Heart left ventricle (tissue), 16 donors: ENCODE measurements at regions of chr1 and their contacts with region 1.

Region 1: GRCh38 chr1:175373786-175374623 is 181.4 kb upstream of the KIAA0040 start:
- DNase-seq: no peak
- ATAC-seq: peak in 3 of 4 donors; percentile 62 to 77 (median 73)
- H3K4me3 ChIP-seq: no peak overlapping the region
- H3K27ac ChIP-seq: no peak overlapping the region
- H3K4me1 ChIP-seq: no peaks in the 10 kb centered on the region
- H3K27me3 ChIP-seq: peaks cover 0 to 15% (median 0%) of the 10 kb centered on the region in 9 donors
- CTCF ChIP-seq: peak; percentile 43 to 73 (median 61)
- POLR2A ChIP-seq: no peak

Region 2: GRCh38 chr1:175580841-175581240 is 206.8 kb after region 1 on chr1:
- intact Hi-C with region 1: no loop called
- DNase-seq: no peak
- ATAC-seq: no peak
- H3K4me3 ChIP-seq: no peak overlapping the region
- H3K27ac ChIP-seq: no peak overlapping the region
- H3K4me1 ChIP-seq: no peaks in the 10 kb centered on the region
- H3K27me3 ChIP-seq: peaks cover 0 to 5% (median 0%) of the 10 kb centered on the region in 9 donors
- CTCF ChIP-seq: no peak
- POLR2A ChIP-seq: no peak

Region 3: GRCh38 chr1:175742790-175743459 is 368.9 kb after region 1 on chr1:
- intact Hi-C with region 1: loop called in 1 of 10 experiments (anchors 10 kb)
- DNase-seq: no peak
- ATAC-seq: peak; percentile 37 to 79 (median 51)
- H3K4me3 ChIP-seq: no peak overlapping the region
- H3K27ac ChIP-seq: no peak overlapping the region
- H3K4me1 ChIP-seq: peaks cover 0 to 5% (median 0%) of the 10 kb centered on the region in 12 donors
- H3K27me3 ChIP-seq: peaks cover 0 to 22% (median 4%) of the 10 kb centered on the region in 9 donors
- CTCF ChIP-seq: no peak
- POLR2A ChIP-seq: no peak

Region 4: GRCh38 chr1:175873290-175873935 is 499.4 kb after region 1 on chr1:
- intact Hi-C with region 1: loop called in 1 of 10 experiments (anchors 10 kb)
- DNase-seq: no peak
- ATAC-seq: no peak
- H3K4me3 ChIP-seq: no peak overlapping the region
- H3K27ac ChIP-seq: no peak overlapping the region
- H3K4me1 ChIP-seq: peaks cover 0 to 5% (median 0%) of the 10 kb centered on the region in 12 donors
- H3K27me3 ChIP-seq: no peaks in the 10 kb centered on the region
- CTCF ChIP-seq: no peak
- POLR2A ChIP-seq: no peak

Region 5: GRCh38 chr1:175887981-175888433 is 514.0 kb after region 1 on chr1:
- intact Hi-C with region 1: loop called in 5 of 10 experiments (anchors 5 to 10 kb)
- DNase-seq: peak; percentile 45 to 68 (median 56)
- ATAC-seq: peak; percentile 82 to 97 (median 92)
- H3K4me3 ChIP-seq: no peak overlapping the region
- H3K27ac ChIP-seq: no peak overlapping the region
- H3K4me1 ChIP-seq: peaks cover 0 to 10% (median 0%) of the 10 kb centered on the region in 12 donors
- H3K27me3 ChIP-seq: no peaks in the 10 kb centered on the region
- CTCF ChIP-seq: peak; percentile 64 to 88 (median 78)
- POLR2A ChIP-seq: no peak

Region 6: GRCh38 chr1:176073524-176074157 is 699.6 kb after region 1 on chr1:
- intact Hi-C with region 1: loop called in 9 of 10 experiments (anchors 2 to 10 kb)
- DNase-seq: peak in 2 of 5 donors; percentile 32 to 41
- ATAC-seq: peak in 3 of 4 donors; percentile 67 to 78 (median 71)
- H3K4me3 ChIP-seq: no peak overlapping the region
- H3K27ac ChIP-seq: no peak overlapping the region
- H3K4me1 ChIP-seq: peaks cover 0 to 7% (median 0%) of the 10 kb centered on the region in 12 donors
- H3K27me3 ChIP-seq: no peaks in the 10 kb centered on the region
- CTCF ChIP-seq: peak; percentile 59 to 85 (median 71)
- POLR2A ChIP-seq: no peak

Region 7: GRCh38 chr1:176857632-176858031 is 1483.6 kb after region 1 on chr1:
- intact Hi-C with region 1: loop called in 1 of 10 experiments (anchors 10 kb)
- DNase-seq: no peak
- ATAC-seq: peak in 2 of 4 donors; percentile 59 to 88
- H3K4me3 ChIP-seq: no peak overlapping the region
- H3K27ac ChIP-seq: no peak overlapping the region
- H3K4me1 ChIP-seq: peaks cover 0 to 11% (median 0%) of the 10 kb centered on the region in 12 donors
- H3K27me3 ChIP-seq: no peaks in the 10 kb centered on the region
- CTCF ChIP-seq: no peak
- POLR2A ChIP-seq: no peak

Region 8: GRCh38 chr1:176880954-176881595 is 1507.1 kb after region 1 on chr1:
- intact Hi-C with region 1: loop called in 1 of 10 experiments (anchors 5 kb)
- DNase-seq: peak; percentile 58 to 71 (median 68)
- ATAC-seq: peak; percentile 57 to 92 (median 80)
- H3K4me3 ChIP-seq: no peak overlapping the region
- H3K27ac ChIP-seq: no peak overlapping the region
- H3K4me1 ChIP-seq: peaks cover 0 to 5% (median 0%) of the 10 kb centered on the region in 12 donors
- H3K27me3 ChIP-seq: no peaks in the 10 kb centered on the region
- CTCF ChIP-seq: peak; percentile 69 to 87 (median 79)
- POLR2A ChIP-seq: no peak